Psoas muscle (tissue), 8 donors: ENCODE measurements at regions of chr14 and their contacts with region 1.

Region 1: DNA sequence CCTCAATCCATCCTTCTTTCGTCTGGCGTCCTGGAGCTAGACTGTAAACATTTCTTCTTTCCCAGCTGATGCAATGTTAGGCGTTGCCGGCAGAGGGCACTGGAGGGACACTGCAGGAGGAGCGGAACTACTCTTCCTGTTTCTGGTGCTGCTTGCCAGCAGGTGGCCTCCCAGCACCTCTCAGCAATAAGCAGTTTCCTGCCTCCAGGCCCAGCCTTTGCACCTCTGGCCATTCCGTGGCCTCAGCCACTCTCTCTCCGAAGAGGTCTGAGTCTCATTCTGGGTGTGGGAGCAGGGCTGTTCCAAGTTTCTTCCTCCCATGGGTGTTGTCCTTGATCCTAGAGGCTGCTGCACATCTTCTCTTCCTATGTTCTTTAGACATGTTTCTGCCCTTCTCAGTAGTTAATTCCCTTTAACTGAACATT is 7.5 kb upstream of the ASPG start:
- DNase-seq: peak; percentile 82 to 89
- ATAC-seq: peak; percentile 89 to 92 (median 90)
- H3K4me3 ChIP-seq: no peak overlapping the region
- H3K27ac ChIP-seq: no peak overlapping the region
- H3K4me1 ChIP-seq: peaks cover 5% of the 10 kb centered on the region
- H3K27me3 ChIP-seq: peaks cover 0 to 19% (median 2%) of the 10 kb centered on the region in 3 donors
- CTCF ChIP-seq: peak; percentile 99

Region 2: GRCh38 chr14:104130974-104131651 is 53.1 kb after region 1 on chr14:
- intact Hi-C with region 1: loop called in 1 of 2 experiments (anchors 1 kb)
- DNase-seq: peak; percentile 18 to 50
- ATAC-seq: peak in 3 of 4 donors; percentile 34 to 37 (median 37)
- H3K4me3 ChIP-seq: no peak overlapping the region
- H3K27ac ChIP-seq: no peak overlapping the region
- H3K4me1 ChIP-seq: no peaks in the 10 kb centered on the region
- H3K27me3 ChIP-seq: peaks cover 0 to 44% (median 16%) of the 10 kb centered on the region in 3 donors
- CTCF ChIP-seq: peak; percentile 49

Region 3: GRCh38 chr14:104563742-104564615 is 485.9 kb after region 1 on chr14:
- intact Hi-C with region 1: loop called in 1 of 2 experiments (anchors 5 kb)
- DNase-seq: peak; percentile 67 to 84
- ATAC-seq: peak; percentile 84 to 92 (median 85)
- H3K4me3 ChIP-seq: no peak overlapping the region
- H3K27ac ChIP-seq: no peak overlapping the region
- H3K4me1 ChIP-seq: no peaks in the 10 kb centered on the region
- H3K27me3 ChIP-seq: peaks cover 0 to 42% (median 3%) of the 10 kb centered on the region in 3 donors
- CTCF ChIP-seq: peak; percentile 81

Region 4: DNA sequence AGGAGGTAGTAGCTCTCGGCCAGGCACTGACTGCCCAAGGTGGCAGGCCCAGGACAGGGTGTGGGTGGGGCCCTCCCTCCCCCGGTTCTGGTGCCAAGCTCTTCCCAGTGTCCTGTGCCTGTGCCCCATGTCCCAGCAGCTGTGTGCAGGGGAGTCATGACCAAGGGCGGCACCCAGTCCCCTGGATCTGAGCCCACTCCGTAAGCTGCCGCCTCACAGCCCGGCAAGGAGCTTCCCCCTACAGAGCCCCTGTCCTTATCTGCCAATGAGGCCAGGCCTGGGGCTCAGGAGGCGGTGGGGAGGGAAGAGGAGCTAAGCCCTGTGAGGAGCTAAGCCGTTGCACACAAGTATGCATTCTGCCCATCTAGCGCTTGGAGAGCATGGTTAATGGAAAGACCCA is 495.9 kb after region 1 on chr14:
- intact Hi-C with region 1: loop called in 1 of 2 experiments (anchors 5 kb)
- DNase-seq: no peak
- ATAC-seq: peak in 1 of 4 donors; percentile 32
- H3K4me3 ChIP-seq: no peak overlapping the region
- H3K27ac ChIP-seq: no peak overlapping the region
- H3K4me1 ChIP-seq: peaks cover 14% of the 10 kb centered on the region
- H3K27me3 ChIP-seq: peaks cover 0 to 4% (median 2%) of the 10 kb centered on the region in 3 donors
- CTCF ChIP-seq: no peak

Region 5: GRCh38 chr14:104639889-104640548 is 562.0 kb after region 1 on chr14:
- intact Hi-C with region 1: loop called (anchors 2 kb)
- DNase-seq: peak; percentile 47 to 69
- ATAC-seq: peak; percentile 84 to 95 (median 87)
- H3K4me3 ChIP-seq: no peak overlapping the region
- H3K27ac ChIP-seq: no peak overlapping the region
- H3K4me1 ChIP-seq: no peaks in the 10 kb centered on the region
- H3K27me3 ChIP-seq: peaks cover 0 to 34% (median 7%) of the 10 kb centered on the region in 3 donors
- CTCF ChIP-seq: peak; percentile 94